IMR-90 (cell line): ENCODE measurements at regions of chr10 and their contacts with region 1.

Region 1: DNA sequence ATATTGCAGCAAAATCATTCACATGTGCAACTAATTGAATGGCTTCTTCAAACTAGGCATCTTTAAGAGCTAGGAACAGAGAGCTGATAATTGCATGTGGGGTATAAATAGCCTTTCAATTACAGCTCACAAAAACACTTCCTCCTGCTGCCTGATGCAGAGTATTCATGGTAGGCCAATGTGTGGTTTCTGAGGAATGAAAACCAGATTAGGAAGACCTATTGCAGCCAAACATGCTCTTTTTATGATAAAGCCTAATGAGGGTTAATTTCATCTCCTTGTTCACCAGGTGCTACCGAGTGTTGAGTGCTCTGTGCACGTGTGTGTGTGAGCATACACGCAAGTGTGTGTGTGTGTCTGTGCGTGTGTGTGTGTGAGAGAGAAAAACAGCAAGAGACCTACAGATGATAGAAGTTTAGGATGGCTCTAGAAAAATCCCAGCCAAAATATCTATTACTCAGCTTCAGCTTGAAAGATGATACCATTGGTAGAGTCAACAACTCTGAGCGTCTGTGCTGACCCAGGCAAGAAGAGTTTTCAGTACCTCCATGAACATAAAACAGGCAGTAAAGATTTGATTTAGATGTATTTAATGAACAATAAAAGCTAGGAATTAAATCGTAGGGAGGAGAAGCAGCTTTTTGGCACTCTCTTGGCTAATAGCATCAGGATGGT is 448.5 kb upstream of the ANKRD30A start:
- DNase-seq: peak; percentile 78
- ATAC-seq: peak; percentile 77
- H3K4me3 ChIP-seq: no peak overlapping the region
- H3K27ac ChIP-seq: no peak overlapping the region
- H3K4me1 ChIP-seq: peaks cover 21% of the 10 kb centered on the region
- H3K27me3 ChIP-seq: no peaks in the 10 kb centered on the region
- CTCF ChIP-seq: no peak
- POLR2A ChIP-seq: no peak
- RAD21 ChIP-seq: no peak

Region 2: DNA sequence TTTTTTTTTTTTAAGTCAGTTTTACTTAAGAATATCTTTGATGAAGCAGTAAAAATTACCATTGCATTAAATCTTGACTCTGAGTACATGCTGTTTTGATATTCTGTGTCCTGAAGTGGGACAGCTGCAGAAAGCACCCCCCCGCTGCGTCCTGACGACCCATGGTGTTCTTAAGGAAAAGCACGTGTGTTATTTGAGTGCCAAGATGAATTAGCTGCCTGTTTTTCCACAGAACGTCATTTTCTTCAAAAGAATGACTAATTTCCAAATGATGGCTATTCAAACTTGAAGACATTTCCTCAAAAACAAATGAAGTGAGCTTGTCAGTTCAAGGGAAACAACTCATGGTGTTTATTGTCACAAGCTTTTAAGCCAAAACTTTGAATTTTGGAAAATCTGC is 1504.3 kb before region 1 on chr10:
- CTCF ChIA-PET with region 1: no interaction called
- POLR2A ChIA-PET with region 1: no interaction called
- dilution Hi-C with region 1: no loop called
- in situ Hi-C with region 1: no loop called
- intact Hi-C with region 1: no loop called
- DNase-seq: peak; percentile 41
- ATAC-seq: no peak
- H3K4me3 ChIP-seq: no peak overlapping the region
- H3K27ac ChIP-seq: no peak overlapping the region
- H3K4me1 ChIP-seq: peaks cover 6% of the 10 kb centered on the region; the same call in 1 of the 2 replicates
- H3K27me3 ChIP-seq: no peaks in the 10 kb centered on the region
- CTCF ChIP-seq: no peak
- POLR2A ChIP-seq: no peak
- RAD21 ChIP-seq: no peak

Region 3: GRCh38 chr10:36759141-36759805 is 82.4 kb after region 1 on chr10:
- CTCF ChIA-PET with region 1: no interaction called
- POLR2A ChIA-PET with region 1: no interaction called
- dilution Hi-C with region 1: no loop called
- in situ Hi-C with region 1: no loop called
- intact Hi-C with region 1: loop called (anchors 5 kb)
- DNase-seq: peak; percentile 93
- ATAC-seq: peak; percentile 94
- H3K4me3 ChIP-seq: no peak overlapping the region
- H3K27ac ChIP-seq: peak overlapping the region; percentile 69
- H3K4me1 ChIP-seq: peaks cover 5% of the 10 kb centered on the region
- H3K27me3 ChIP-seq: no peaks in the 10 kb centered on the region
- CTCF ChIP-seq: no peak
- POLR2A ChIP-seq: no peak
- RAD21 ChIP-seq: no peak